CD4-positive, alpha-beta memory T cell (primary cell): ENCODE measurements at regions of chr14 and their contacts with region 1.

Region 1: GRCh38 chr14:49862089-49862673 is 9.6 kb upstream of the NEMF start:
- DNase-seq: peak; percentile 85 to 91 (median 88)
- H3K4me3 ChIP-seq: peak overlapping the region; percentile 61 to 76
- H3K4me3 Mint-ChIP-seq: no peak overlapping the region
- H3K27ac ChIP-seq: peak overlapping the region; percentile 97
- H3K27ac Mint-ChIP-seq: no peak overlapping the region
- H3K4me1 ChIP-seq: peaks cover 38% of the 10 kb centered on the region
- H3K4me1 Mint-ChIP-seq: peaks cover 0 to 11% (median 6%) of the 10 kb centered on the region in 4 donors
- H3K27me3 ChIP-seq: no peaks in the 10 kb centered on the region
- H3K27me3 Mint-ChIP-seq: peaks cover 3 to 8% of the 10 kb centered on the region in 2 donors

Region 2: GRCh38 chr14:49633640-49634546 is 228.3 kb before region 1 on chr14:
- CTCF ChIA-PET with region 1: interaction called, 24 read pairs
- POLR2A ChIA-PET with region 1: interaction called, 30 read pairs
- intact Hi-C with region 1: loop called (anchors 1 kb)
- DNase-seq: peak; percentile 92 to 95 (median 94)
- H3K4me3 ChIP-seq: peak overlapping the region; percentile 90 to 99
- H3K4me3 Mint-ChIP-seq: peak overlapping the region; percentile 95 to 100 (median 97)
- H3K27ac ChIP-seq: peak overlapping the region; percentile 99
- H3K27ac Mint-ChIP-seq: peak overlapping the region; percentile 92 to 100 (median 96)
- H3K4me1 ChIP-seq: peaks cover 48% of the 10 kb centered on the region
- H3K4me1 Mint-ChIP-seq: peaks cover 26 to 75% (median 43%) of the 10 kb centered on the region in 4 donors
- H3K27me3 ChIP-seq: no peaks in the 10 kb centered on the region
- H3K27me3 Mint-ChIP-seq: peaks cover 0 to 1% of the 10 kb centered on the region in 2 donors

Region 3: GRCh38 chr14:49940808-49941421 is 78.7 kb after region 1 on chr14:
- CTCF ChIA-PET with region 1: interaction called, 21 read pairs
- POLR2A ChIA-PET with region 1: interaction called, 33 read pairs
- intact Hi-C with region 1: no loop called
- DNase-seq: peak in 4 of 5 donors; percentile 40 to 56 (median 48)
- H3K4me3 ChIP-seq: peak overlapping the region in 1 of 2 donors; percentile 15
- H3K4me3 Mint-ChIP-seq: peak overlapping the region; percentile 60 to 86 (median 68)
- H3K27ac ChIP-seq: peak overlapping the region; percentile 23
- H3K27ac Mint-ChIP-seq: peak overlapping the region; percentile 31 to 93 (median 88)
- H3K4me1 ChIP-seq: peaks cover 52% of the 10 kb centered on the region
- H3K4me1 Mint-ChIP-seq: peaks cover 44 to 72% (median 61%) of the 10 kb centered on the region in 4 donors
- H3K27me3 ChIP-seq: no peaks in the 10 kb centered on the region
- H3K27me3 Mint-ChIP-seq: no peaks in the 10 kb centered on the region

Region 4: GRCh38 chr14:50003213-50004031 is 141.2 kb after region 1 on chr14:
- CTCF ChIA-PET with region 1: interaction called, 182 read pairs
- POLR2A ChIA-PET with region 1: interaction called, 321 read pairs
- intact Hi-C with region 1: loop called (anchors 1 kb)
- DNase-seq: peak; percentile 76 to 87 (median 79)
- H3K4me3 ChIP-seq: peak overlapping the region; percentile 65 to 69
- H3K4me3 Mint-ChIP-seq: peak overlapping the region; percentile 83 to 96 (median 87)
- H3K27ac ChIP-seq: peak overlapping the region; percentile 94
- H3K27ac Mint-ChIP-seq: peak overlapping the region; percentile 96 to 99 (median 98)
- H3K4me1 ChIP-seq: peaks cover 57% of the 10 kb centered on the region
- H3K4me1 Mint-ChIP-seq: peaks cover 43 to 64% (median 52%) of the 10 kb centered on the region in 4 donors
- H3K27me3 ChIP-seq: no peaks in the 10 kb centered on the region
- H3K27me3 Mint-ChIP-seq: no peaks in the 10 kb centered on the region

Region 5: DNA sequence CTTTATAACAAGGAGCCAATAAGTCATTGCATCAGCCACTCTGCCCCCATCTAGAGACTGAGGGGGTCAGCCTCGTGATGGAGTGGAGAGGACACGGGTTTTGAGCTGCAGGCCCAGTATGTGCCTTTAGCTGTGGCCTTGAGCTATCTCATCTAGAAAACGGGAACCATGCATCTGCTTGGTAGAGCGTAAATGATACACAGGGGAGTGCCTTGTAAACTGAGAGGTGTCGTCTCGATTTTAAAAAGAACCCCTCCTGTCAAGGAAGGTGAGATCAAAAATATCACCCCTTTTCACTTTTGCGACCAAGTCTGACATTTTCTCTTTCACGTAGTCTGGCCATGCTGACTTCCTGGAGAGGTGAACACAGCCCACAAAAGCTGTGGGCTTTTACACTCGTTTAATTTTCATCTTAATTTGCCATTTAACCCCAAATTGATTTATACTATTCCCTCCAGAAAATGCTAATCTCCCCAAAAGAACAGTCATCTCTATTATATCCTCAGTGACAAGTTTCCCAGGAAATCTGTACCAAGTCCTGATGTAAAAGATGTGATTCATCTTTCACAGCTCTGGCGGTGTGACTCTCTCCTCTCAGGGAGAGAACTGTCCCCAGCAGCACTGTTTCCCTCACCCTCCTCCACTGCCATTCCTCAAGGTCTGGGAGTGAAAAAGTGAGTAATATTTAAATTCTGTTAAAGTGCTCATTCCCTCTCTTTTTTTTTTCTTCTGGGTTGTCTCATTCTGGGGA is 223.6 kb after region 1 on chr14:
- CTCF ChIA-PET with region 1: interaction called, 58 read pairs
- POLR2A ChIA-PET with region 1: interaction called, 81 read pairs
- intact Hi-C with region 1: loop called (anchors 2 kb)
- DNase-seq: peak; percentile 21 to 48 (median 28)
- H3K4me3 ChIP-seq: no peak overlapping the region
- H3K4me3 Mint-ChIP-seq: peak overlapping the region; percentile 23 to 78 (median 71)
- H3K27ac ChIP-seq: peak overlapping the region; percentile 99
- H3K27ac Mint-ChIP-seq: peak overlapping the region; percentile 83 to 99 (median 95)
- H3K4me1 ChIP-seq: peaks cover 88% of the 10 kb centered on the region
- H3K4me1 Mint-ChIP-seq: peaks cover 58 to 89% (median 76%) of the 10 kb centered on the region in 4 donors
- H3K27me3 ChIP-seq: no peaks in the 10 kb centered on the region
- H3K27me3 Mint-ChIP-seq: no peaks in the 10 kb centered on the region

Region 6: DNA sequence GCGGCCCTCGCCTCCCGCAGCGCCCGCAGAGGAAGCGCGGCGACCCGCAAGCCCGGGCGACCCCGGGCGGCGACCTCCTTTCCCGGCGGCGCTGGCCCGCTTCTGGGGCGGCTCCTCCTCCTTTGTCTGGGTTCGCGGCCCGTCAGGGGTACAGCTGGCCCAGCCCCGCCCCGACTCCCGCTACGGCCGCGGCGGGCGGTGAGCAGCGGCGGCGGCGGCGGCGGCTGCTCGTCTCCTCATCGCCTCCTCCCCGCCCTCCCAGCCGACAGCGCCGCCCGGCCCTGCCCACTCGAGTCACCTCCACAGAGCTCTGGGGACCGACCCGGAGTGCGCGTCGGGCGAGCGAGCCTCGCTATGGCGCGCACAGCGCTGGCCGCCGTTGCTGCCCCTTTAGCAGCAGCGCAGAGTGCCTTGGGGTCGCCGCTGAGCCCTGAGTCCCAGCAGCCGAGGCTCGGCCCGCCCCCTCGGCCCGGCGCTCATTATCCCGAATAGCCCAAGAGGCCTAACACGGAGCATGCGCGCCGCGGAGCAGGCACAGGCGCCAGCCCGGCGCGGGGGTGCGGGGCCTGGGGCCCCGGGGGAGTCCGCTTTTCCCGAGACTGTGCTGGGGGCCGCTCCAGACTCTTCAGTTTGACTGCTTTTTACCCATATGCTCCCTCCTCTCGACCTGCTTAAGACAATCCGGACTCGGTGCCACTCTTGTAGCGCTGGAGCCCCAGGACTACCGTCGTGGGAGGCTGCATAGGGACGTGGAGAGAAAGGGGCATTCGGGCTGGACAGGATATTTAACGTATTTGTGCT is 369.5 kb after region 1 on chr14 and contains the start of gene SOS2:
- CTCF ChIA-PET with region 1: no interaction called
- POLR2A ChIA-PET with region 1: interaction called, 4 read pairs
- intact Hi-C with region 1: loop called (anchors 2 kb)
- DNase-seq: peak; percentile 83 to 89 (median 83)
- H3K4me3 ChIP-seq: peak within 1 kb of the TSS; percentile 50 to 81
- H3K4me3 Mint-ChIP-seq: peak within 1 kb of the TSS; percentile 86 to 97 (median 90)
- H3K27ac ChIP-seq: peak within 1 kb of the TSS; percentile 81
- H3K27ac Mint-ChIP-seq: peak within 1 kb of the TSS; percentile 90 to 98 (median 95)
- H3K4me1 ChIP-seq: peaks cover 48% of the 10 kb centered on the region
- H3K4me1 Mint-ChIP-seq: peaks cover 27 to 56% (median 38%) of the 10 kb centered on the region in 4 donors
- H3K27me3 ChIP-seq: no peaks in the 10 kb centered on the region
- H3K27me3 Mint-ChIP-seq: no peaks in the 10 kb centered on the region
- total RNA-seq, gene SOS2: 42.1 to 43.4 TPM